Body of pancreas (tissue), 4 donors: ENCODE measurements at regions of chr1 and their contacts with region 1.

Region 1: GRCh38 chr1:54810100-54810942 is 9.2 kb upstream of the TTC22 start:
- DNase-seq: peak; percentile 65 to 82 (median 72)
- ATAC-seq: peak; percentile 82
- H3K4me3 ChIP-seq: no peak overlapping the region
- H3K27ac ChIP-seq: no peak overlapping the region
- H3K4me1 ChIP-seq: no peaks in the 10 kb centered on the region
- H3K27me3 ChIP-seq: no peaks in the 10 kb centered on the region
- CTCF ChIP-seq: peak; percentile 72 to 96 (median 88)
- POLR2A ChIP-seq: no peak

Region 2: DNA sequence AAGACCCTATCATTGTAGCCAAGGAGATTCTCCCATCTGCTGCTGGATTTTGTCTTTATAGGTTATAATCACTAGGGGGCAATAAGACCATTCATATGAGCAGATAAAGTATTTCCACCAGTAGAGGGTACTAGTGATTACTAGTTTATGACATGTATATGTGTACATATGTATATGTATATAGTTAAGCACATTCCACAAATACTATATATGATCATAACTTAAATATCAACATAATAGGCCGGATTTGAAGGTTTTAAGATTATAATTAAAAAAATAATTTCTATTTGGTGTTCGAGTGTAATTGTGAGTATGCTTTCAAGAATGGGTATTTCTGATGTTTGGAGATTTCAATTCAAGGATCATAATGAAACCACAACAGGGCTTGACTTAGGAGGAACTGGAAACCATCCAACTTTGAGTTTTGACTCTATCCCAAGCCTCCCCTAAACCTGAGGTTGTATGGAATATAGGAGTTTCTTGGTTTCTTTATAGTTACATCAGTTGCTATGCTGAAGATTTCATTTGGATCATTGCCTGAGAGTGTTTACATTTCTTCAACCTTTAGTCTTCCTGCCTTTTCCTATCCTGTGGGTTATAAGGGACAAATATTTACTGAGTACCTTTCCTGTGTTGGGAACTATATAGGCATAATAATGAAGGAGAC is 740.0 kb before region 1 on chr1:
- intact Hi-C with region 1: loop called (anchors 10 kb)
- DNase-seq: no peak
- ATAC-seq: peak; percentile 75
- H3K4me3 ChIP-seq: no peak overlapping the region
- H3K27ac ChIP-seq: no peak overlapping the region
- H3K4me1 ChIP-seq: no peaks in the 10 kb centered on the region
- H3K27me3 ChIP-seq: no peaks in the 10 kb centered on the region
- CTCF ChIP-seq: peak; percentile 72 to 93 (median 88)
- POLR2A ChIP-seq: no peak

Region 3: GRCh38 chr1:54499360-54500106 is 310.8 kb before region 1 on chr1:
- intact Hi-C with region 1: loop called (anchors 10 kb)
- DNase-seq: peak; percentile 44 to 62 (median 53)
- ATAC-seq: peak; percentile 73
- H3K4me3 ChIP-seq: no peak overlapping the region
- H3K27ac ChIP-seq: no peak overlapping the region
- H3K4me1 ChIP-seq: peaks cover 16% of the 10 kb centered on the region
- H3K27me3 ChIP-seq: no peaks in the 10 kb centered on the region
- CTCF ChIP-seq: peak; percentile 19 to 57 (median 31)
- POLR2A ChIP-seq: no peak

Region 4: DNA sequence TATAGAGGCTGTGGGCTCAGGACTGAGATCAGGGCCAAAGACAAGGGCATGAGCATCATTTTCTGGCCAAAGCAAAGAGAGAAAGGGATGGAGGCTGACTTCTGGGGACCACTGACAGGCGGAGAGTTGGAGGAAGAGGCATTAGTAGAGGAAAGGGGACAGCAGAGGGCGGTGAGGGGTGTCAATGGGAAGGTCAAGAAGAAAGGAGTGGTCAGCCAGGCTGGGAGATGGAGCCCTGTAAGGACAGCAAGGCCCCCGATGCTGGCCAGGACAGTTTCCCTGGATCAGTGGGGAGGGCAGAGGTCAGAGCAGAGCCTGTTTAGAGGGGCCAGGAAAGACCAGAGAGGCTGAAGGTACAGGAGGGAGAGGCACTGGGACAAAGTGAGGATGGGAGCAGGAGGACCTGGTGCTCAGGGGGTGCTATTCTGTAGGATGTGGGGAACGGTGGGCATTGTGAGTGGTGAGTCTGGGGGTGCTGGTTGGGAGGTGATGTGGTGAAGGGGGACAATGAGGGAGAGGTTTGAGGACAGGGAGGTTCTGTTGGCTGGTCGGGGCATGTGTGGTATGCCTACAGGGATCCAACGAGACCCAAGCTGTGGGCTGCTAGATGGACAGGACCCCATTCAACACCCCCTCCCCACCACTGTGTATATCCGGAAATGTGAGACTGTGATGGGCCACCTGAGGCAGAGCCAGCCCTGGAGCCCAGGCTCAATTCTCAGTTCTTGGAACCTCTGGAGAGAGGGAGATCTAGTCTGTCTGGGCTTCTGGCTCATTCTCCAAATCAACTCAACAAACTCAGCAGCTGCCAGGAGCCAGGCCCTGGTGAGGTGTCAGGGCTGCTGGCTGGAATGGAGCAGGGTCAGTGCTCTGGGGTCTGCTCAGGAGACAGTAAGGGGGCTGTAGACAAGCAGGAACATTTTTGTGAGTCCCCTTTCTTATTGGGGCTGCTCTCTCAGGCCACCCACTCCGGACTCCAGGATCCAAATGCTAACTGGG is 185.6 kb before region 1 on chr1:
- intact Hi-C with region 1: no loop called
- DNase-seq: no peak
- ATAC-seq: no peak
- H3K4me3 ChIP-seq: no peak overlapping the region
- H3K27ac ChIP-seq: no peak overlapping the region
- H3K4me1 ChIP-seq: no peaks in the 10 kb centered on the region
- H3K27me3 ChIP-seq: no peaks in the 10 kb centered on the region
- CTCF ChIP-seq: no peak
- POLR2A ChIP-seq: no peak

Region 5: DNA sequence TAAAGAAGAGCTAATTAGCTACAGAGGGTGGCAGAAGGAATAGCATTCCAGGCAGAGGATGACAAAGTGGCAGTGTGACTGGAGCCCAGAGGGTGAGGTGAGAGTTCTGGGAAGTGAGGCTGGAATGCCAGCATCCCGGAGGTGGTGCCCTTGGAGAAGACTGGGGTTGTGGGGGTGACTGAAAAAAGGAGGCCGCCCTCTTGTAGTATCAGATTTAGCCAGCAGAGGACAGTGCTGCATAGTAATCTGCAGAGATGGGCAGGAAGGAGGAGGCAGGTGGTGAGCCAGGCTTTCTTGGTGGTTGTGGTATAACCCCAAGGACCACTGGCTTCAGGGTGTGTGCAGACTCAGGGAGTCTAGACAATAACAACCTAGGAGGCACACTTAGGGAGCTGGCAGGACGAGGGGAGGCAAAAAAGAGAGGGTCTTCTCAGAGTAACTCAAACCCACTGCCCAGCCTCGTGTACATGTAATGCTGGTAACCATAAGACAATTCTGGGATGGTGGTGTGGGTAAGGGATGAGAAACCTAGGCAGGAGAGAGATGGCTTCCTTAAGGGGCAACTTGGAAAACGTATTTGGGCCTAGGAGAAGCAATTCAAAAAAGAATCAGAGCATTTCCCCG is 138.2 kb before region 1 on chr1:
- intact Hi-C with region 1: loop called (anchors 10 kb)
- DNase-seq: peak; percentile 44 to 65 (median 56)
- ATAC-seq: peak; percentile 50
- H3K4me3 ChIP-seq: no peak overlapping the region
- H3K27ac ChIP-seq: no peak overlapping the region
- H3K4me1 ChIP-seq: no peaks in the 10 kb centered on the region
- H3K27me3 ChIP-seq: no peaks in the 10 kb centered on the region
- CTCF ChIP-seq: peak; percentile 32 to 89 (median 70)
- POLR2A ChIP-seq: no peak

Region 6: GRCh38 chr1:54944610-54945544 is 134.6 kb after region 1 on chr1:
- intact Hi-C with region 1: no loop called
- DNase-seq: peak; percentile 74 to 86 (median 81)
- ATAC-seq: peak; percentile 70
- H3K4me3 ChIP-seq: no peak overlapping the region
- H3K27ac ChIP-seq: no peak overlapping the region
- H3K4me1 ChIP-seq: peaks cover 6% of the 10 kb centered on the region
- H3K27me3 ChIP-seq: no peaks in the 10 kb centered on the region
- CTCF ChIP-seq: peak; percentile 67 to 90 (median 75)
- POLR2A ChIP-seq: no peak